ENCODE measurements at regions of chr19 and their contacts with region 1.

Region 1: DNA sequence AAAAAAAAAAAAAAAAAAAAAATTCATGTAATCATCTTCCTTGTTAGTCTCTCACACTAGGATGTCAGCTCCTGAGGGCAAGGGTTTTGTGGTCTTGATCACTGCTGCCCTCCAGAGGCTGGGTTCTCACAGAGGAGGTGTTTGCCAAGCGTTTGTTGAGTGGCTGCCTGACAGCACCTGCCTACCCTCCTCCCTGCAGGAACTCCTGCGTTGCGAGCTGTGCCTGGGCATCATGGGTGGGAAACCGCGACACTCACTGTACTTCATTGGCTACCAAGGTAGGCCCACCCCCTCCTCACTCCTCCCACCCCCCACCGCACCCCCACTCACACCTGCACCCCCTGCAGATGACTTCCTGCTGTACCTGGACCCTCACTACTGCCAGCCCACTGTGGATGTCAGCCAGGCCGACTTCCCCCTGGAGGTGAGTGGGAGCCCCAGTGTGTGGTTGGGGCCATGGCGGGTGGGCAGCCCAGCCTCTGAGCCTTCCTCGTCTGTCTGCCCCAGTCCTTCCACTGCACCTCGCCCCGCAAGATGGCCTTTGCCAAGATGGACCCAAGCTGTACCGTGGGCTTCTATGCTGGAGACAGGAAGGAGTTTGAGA is 8.1 kb downstream of the ATG4D start:
- DNase-seq: no peak
- H3K4me3 ChIP-seq: no peak overlapping the region
- H3K27ac ChIP-seq: no peak overlapping the region
- H3K4me1 ChIP-seq: no peaks in the 10 kb centered on the region
- H3K27me3 ChIP-seq: no peaks in the 10 kb centered on the region
- CTCF ChIP-seq: peak; percentile 45 to 58 (median 51)
- EP300 ChIP-seq: no peak
- POLR2A ChIP-seq: no peak
- RAD21 ChIP-seq: peak; percentile 52 to 64

Region 2: GRCh38 chr19:10491472-10492047 is 60.2 kb before region 1 on chr19:
- CTCF ChIA-PET with region 1: interaction called, 19 read pairs
- POLR2A ChIA-PET with region 1: interaction called, 4 read pairs
- DNase-seq: no peak
- H3K4me3 ChIP-seq: no peak overlapping the region
- H3K27ac ChIP-seq: no peak overlapping the region
- H3K4me1 ChIP-seq: no peaks in the 10 kb centered on the region
- H3K27me3 ChIP-seq: no peaks in the 10 kb centered on the region
- CTCF ChIP-seq: no peak
- EP300 ChIP-seq: no peak
- POLR2A ChIP-seq: no peak
- RAD21 ChIP-seq: no peak

Region 3: DNA sequence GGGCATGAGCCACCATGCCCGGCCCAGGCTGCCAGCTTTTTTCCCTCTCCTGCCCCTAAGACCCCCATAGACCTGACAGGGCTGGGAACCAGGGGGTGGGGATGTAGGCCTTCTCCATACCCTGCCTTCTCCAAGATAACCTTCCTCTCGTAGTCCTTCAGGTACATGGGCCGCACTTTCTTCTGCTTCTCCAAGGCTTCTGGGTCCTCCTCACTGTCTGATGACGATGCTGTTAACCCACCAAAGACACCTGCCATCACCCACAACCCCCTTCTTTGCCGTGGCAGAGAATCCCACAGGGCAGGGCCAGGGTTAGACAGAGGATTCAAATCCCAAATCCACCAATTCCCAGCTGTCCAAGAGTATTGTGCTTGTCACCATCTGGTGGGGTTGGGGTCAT is 10.8 kb after region 1 on chr19:
- CTCF ChIA-PET with region 1: interaction called, 13 read pairs
- POLR2A ChIA-PET with region 1: interaction called, 41 read pairs
- DNase-seq: no peak
- H3K4me3 ChIP-seq: no peak overlapping the region
- H3K27ac ChIP-seq: no peak overlapping the region
- H3K4me1 ChIP-seq: peaks cover 0 to 12% (median 6%) of the 10 kb centered on the region in 4 experiments; a peak in 4 of 7 replicates
- H3K27me3 ChIP-seq: peaks cover 0 to 8% (median 7%) of the 10 kb centered on the region in 4 experiments; a peak in 3 of 7 replicates
- CTCF ChIP-seq: no peak
- EP300 ChIP-seq: no peak
- POLR2A ChIP-seq: no peak
- RAD21 ChIP-seq: no peak

Region 4: GRCh38 chr19:10568826-10569651 is 17.2 kb after region 1 on chr19 and contains the start of gene CDKN2D:
- CTCF ChIA-PET with region 1: interaction called, 10 read pairs
- POLR2A ChIA-PET with region 1: interaction called, 41 read pairs
- DNase-seq: peak; percentile 99
- H3K4me3 ChIP-seq: peak within 1 kb of the TSS; percentile 58 to 71 (median 70)
- H3K27ac ChIP-seq: peak within 1 kb of the TSS; percentile 79
- H3K4me1 ChIP-seq: peaks cover 0 to 19% (median 9%) of the 10 kb centered on the region in 4 experiments; a peak in 6 of 7 replicates
- H3K27me3 ChIP-seq: peaks cover 0 to 10% (median 7%) of the 10 kb centered on the region in 4 experiments; a peak in 4 of 7 replicates
- CTCF ChIP-seq: no peak
- EP300 ChIP-seq: no peak
- POLR2A ChIP-seq: peak; percentile 64 to 65
- RAD21 ChIP-seq: no peak
- total RNA-seq, gene CDKN2D: 2.6 and 3.0 TPM in 2 replicates

Measured in H1 (cell line).